ENCODE measurements at regions of chr1 and their contacts with region 1.

Region 1: GRCh38 chr1:25997828-25998761 is at the start of gene PAFAH2:
- DNase-seq: peak; percentile 99
- ATAC-seq: peak; percentile 99
- H3K4me3 ChIP-seq: peak within 1 kb of the TSS; percentile 74
- H3K27ac ChIP-seq: no peak within 1 kb of the TSS
- H3K4me1 ChIP-seq: peaks cover 14% of the 10 kb centered on the region
- H3K27me3 ChIP-seq: no peaks in the 10 kb centered on the region
- CTCF ChIP-seq: peak; percentile 91
- total RNA-seq, gene PAFAH2: 7.4 and 9.0 TPM in 2 replicates

Region 2: DNA sequence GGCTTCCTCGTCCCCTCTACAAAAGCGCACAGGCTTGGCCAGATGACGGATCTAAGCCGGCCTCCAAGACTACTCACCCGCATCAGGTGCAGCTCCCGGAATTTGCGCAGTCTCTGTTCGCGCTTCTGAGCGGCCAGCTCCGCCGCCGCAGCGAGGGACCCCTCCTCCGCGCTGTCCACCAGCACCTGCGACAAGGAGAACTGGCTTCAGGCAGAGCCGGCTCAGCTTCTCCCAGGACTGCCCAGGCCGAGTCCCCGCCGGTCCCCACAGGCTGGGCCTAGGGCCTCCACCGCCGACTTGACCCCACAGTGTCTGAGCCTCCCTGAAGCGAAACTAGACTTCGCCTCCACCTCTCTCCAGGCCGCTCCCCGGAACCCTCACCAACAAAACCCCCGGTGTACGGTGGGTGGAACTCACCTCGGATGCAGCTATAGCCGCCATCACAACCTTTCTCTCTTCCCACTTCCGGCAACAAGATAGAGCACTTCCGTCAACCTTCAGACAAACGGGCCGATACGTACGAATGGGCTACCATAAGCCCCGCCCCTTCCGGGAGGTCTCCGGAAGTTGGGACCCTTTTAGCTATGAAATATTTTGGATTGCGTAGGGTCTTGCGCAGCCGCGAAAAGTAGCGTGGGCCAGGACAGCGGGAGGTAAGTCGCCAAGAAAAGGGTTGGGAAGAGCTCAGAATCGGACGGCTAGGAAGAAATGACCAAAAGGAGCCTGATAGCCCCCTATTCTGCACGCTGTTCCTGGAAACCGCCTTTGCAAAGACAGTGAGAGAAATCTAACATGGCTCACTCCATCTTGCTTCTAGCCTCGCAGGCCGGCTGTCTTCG is 765.8 kb before region 1 on chr1 and contains the start of gene SYF2:
- CTCF ChIA-PET with region 1: no interaction called
- POLR2A ChIA-PET with region 1: no interaction called
- intact Hi-C with region 1: no loop called
- DNase-seq: peak; percentile 84
- ATAC-seq: peak; percentile 93
- H3K4me3 ChIP-seq: peak within 1 kb of the TSS; percentile 91
- H3K27ac ChIP-seq: peak within 1 kb of the TSS; percentile 72
- H3K4me1 ChIP-seq: peaks cover 21% of the 10 kb centered on the region
- H3K27me3 ChIP-seq: no peaks in the 10 kb centered on the region
- CTCF ChIP-seq: no peak
- total RNA-seq, gene SYF2: 29.8 and 31.0 TPM in 2 replicates

Region 3: DNA sequence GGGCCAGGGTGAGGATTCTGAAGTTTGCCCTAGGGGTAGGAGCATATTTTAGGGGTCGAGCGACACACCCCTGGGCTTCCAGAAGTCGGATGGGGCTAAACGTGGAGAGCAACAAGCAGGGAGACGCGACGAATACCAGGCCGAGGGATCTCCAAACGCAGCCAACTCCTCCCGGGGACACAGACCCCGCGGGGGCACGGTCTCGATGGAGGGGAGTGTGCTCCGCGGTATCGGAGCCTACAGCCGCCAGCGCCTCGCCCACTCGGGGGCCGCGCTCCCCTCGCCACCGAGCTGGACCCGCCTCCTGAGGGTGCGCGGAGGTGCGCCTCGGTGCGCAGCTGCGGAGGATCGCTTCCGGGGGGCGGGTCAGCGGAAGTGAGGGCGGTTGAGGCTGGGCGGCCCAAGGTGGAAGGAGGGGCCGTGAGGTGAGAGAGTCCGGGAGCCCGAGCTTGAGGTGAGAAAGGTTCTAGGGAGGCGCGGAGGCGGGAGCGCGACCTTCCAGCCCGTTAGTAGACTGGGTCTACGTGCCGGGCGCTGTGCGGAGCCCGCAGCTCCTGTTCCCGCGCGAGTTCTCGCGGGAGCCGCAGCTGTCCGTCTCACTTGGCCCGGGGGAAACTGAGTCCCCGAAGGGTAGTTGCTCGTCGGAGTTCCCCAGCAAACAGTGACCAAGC is 178.4 kb before region 1 on chr1 and contains the start of gene MTFR1L:
- CTCF ChIA-PET with region 1: no interaction called
- POLR2A ChIA-PET with region 1: interaction called, 16 read pairs
- intact Hi-C with region 1: loop called (anchors 5 kb)
- DNase-seq: peak; percentile 72
- ATAC-seq: peak; percentile 83
- H3K4me3 ChIP-seq: peak within 1 kb of the TSS; percentile 93
- H3K27ac ChIP-seq: peak within 1 kb of the TSS; percentile 41
- H3K4me1 ChIP-seq: peaks cover 23% of the 10 kb centered on the region
- H3K27me3 ChIP-seq: no peaks in the 10 kb centered on the region
- CTCF ChIP-seq: no peak
- total RNA-seq, gene MTFR1L: 32.3 and 35.6 TPM in 2 replicates

Region 4: GRCh38 chr1:25837262-25837875 is 160.7 kb before region 1 on chr1:
- CTCF ChIA-PET with region 1: interaction called, 6 read pairs
- POLR2A ChIA-PET with region 1: interaction called, 9 read pairs
- intact Hi-C with region 1: loop called (anchors 1 kb)
- DNase-seq: peak; percentile 52
- ATAC-seq: peak; percentile 76
- H3K4me3 ChIP-seq: no peak overlapping the region
- H3K27ac ChIP-seq: no peak overlapping the region
- H3K4me1 ChIP-seq: no peaks in the 10 kb centered on the region
- H3K27me3 ChIP-seq: no peaks in the 10 kb centered on the region
- CTCF ChIP-seq: peak; percentile 79

Region 5: DNA sequence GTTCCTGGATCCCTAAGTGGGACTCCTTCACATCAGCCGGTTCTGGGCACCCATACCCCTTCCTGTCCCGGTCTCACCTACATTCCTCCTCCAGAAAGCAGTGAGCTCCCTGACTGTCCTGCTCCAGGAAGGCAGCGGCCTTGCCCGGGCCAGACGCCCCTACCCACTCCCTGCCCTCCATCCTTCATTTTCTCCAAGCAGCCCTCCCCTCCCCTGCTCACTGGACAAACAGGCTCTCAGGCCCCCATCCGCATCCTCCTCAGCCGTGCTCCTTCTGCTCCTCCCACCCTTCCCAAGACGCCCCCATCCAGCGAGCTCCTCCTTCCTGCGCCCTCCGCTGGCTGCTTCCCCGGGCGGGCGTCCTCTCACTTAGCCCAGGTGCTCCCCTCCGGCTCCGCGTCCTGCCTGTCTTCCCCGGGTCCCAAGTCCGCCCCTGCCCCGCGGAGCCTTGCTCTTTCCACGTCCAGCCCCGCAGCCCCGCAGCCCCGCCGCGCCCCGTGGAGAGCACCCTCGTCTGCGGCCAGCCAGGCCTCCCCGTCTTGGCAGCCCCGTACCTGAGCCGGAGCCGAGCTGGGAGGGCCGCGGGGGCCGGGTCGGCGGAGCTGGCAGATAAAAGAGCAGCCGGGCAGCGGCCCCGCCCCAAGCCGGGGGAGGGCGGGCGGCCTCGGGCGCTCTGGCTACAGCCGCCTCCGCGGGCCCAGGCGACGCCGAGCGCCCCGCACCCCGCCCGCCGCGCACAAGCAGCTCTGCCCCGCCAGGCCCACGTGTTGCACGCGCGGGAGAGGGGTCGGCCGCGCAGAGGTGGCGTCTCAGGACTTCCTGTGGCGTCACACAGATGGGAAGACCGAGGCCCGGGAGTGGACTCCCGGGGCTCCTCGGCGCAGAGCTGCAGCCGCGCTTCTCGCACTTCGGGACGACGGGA is 122.9 kb before region 1 on chr1 and contains the start of gene PAQR7:
- CTCF ChIA-PET with region 1: no interaction called
- POLR2A ChIA-PET with region 1: interaction called, 22 read pairs
- intact Hi-C with region 1: no loop called
- DNase-seq: peak; percentile 64
- ATAC-seq: peak; percentile 80
- H3K4me3 ChIP-seq: peak within 1 kb of the TSS; percentile 90
- H3K27ac ChIP-seq: no peak within 1 kb of the TSS
- H3K4me1 ChIP-seq: peaks cover 6% of the 10 kb centered on the region; the same call in 1 of the 2 replicates
- H3K27me3 ChIP-seq: no peaks in the 10 kb centered on the region
- CTCF ChIP-seq: no peak
- total RNA-seq, gene PAQR7: 6.4 and 7.2 TPM in 2 replicates

Region 6: DNA sequence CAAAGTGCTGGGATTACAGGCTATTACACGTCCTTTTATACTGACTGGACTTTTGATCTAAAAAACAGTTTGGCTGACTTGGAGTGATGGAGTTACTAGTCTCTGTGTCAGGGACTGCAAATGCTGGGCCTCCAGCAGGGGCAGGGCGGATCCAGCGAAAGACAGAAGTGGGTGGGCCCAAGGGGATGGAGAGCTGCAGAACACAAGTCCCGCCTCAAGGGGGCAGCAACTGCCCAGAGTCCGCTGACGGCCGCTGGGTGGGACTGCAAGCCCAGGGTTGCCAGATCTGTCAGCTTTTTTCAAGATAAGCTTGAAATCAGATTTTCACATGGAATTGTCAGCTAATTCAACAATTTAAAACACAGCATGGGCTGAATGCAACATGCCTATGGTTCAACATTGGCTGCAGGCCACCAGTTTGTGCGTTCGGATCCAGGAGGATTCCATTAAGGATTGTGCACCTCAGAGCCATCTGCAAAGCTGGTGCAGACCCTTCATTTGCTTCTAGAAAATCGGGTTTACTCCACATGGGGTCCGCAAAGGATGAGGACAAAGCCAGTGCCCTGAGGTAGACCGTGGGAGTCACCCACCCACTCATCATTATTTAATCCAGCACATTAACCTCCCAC is 102.6 kb before region 1 on chr1:
- CTCF ChIA-PET with region 1: interaction called, 104 read pairs
- POLR2A ChIA-PET with region 1: interaction called, 12 read pairs
- intact Hi-C with region 1: loop called (anchors 1 kb)
- DNase-seq: peak; percentile 92
- ATAC-seq: peak; percentile 76
- H3K4me3 ChIP-seq: no peak overlapping the region
- H3K27ac ChIP-seq: no peak overlapping the region
- H3K4me1 ChIP-seq: peaks cover 39% of the 10 kb centered on the region
- H3K27me3 ChIP-seq: no peaks in the 10 kb centered on the region
- CTCF ChIP-seq: peak; percentile 96

Region 7: DNA sequence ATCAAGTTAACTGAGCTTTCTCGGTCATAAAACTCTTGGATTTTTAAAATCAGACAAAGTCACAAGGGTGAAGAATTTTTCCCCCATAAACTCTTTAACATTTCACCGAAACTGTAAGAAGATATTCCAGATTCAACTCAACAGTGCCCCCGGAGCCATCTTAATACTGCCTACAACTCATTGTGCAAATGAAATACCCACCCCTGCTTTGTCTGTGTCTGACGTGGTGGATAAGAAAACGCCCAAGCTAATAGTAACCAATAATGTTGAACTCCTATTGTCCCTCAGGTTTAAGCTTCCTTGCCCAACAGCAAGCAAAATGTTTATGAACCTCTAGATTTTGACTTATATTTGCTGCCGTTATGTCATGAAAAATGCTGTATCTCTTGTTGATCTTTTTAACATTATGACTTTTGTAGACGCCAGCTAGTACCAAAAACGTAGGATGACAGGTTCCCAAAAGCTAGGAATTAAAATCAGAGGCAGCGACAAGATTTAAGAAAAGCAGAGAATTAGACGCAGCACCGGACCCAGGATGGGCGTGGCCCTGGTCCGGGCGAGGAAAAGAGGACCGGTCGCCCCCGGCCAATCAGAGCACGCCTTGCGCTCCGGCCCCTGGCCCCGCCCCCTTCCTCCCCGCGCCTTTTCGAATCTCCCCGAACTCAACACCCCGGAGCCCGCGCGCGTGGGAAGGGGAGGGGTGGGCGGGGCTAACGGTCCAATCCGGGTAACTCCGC is 93.0 kb before region 1 on chr1:
- CTCF ChIA-PET with region 1: interaction called, 9 read pairs
- POLR2A ChIA-PET with region 1: interaction called, 4 read pairs
- intact Hi-C with region 1: loop called (anchors 2 kb)
- DNase-seq: peak; percentile 87
- ATAC-seq: peak; percentile 79
- H3K4me3 ChIP-seq: peak overlapping the region; percentile 78
- H3K27ac ChIP-seq: peak overlapping the region; percentile 21
- H3K4me1 ChIP-seq: peaks cover 21% of the 10 kb centered on the region
- H3K27me3 ChIP-seq: no peaks in the 10 kb centered on the region
- CTCF ChIP-seq: peak; percentile 43

Region 8: GRCh38 chr1:25922056-25922969 is 75.8 kb before region 1 on chr1:
- CTCF ChIA-PET with region 1: interaction called, 4 read pairs
- POLR2A ChIA-PET with region 1: interaction called, 3 read pairs
- intact Hi-C with region 1: loop called (anchors 2 kb)
- DNase-seq: no peak
- ATAC-seq: no peak
- H3K4me3 ChIP-seq: peak overlapping the region; percentile 68
- H3K27ac ChIP-seq: no peak overlapping the region
- H3K4me1 ChIP-seq: peaks cover 12% of the 10 kb centered on the region; the same call in 1 of the 2 replicates
- H3K27me3 ChIP-seq: no peaks in the 10 kb centered on the region
- CTCF ChIP-seq: no peak